Panc1 (cell line): ENCODE measurements at regions of chr17 and their contacts with region 1.

Region 1: DNA sequence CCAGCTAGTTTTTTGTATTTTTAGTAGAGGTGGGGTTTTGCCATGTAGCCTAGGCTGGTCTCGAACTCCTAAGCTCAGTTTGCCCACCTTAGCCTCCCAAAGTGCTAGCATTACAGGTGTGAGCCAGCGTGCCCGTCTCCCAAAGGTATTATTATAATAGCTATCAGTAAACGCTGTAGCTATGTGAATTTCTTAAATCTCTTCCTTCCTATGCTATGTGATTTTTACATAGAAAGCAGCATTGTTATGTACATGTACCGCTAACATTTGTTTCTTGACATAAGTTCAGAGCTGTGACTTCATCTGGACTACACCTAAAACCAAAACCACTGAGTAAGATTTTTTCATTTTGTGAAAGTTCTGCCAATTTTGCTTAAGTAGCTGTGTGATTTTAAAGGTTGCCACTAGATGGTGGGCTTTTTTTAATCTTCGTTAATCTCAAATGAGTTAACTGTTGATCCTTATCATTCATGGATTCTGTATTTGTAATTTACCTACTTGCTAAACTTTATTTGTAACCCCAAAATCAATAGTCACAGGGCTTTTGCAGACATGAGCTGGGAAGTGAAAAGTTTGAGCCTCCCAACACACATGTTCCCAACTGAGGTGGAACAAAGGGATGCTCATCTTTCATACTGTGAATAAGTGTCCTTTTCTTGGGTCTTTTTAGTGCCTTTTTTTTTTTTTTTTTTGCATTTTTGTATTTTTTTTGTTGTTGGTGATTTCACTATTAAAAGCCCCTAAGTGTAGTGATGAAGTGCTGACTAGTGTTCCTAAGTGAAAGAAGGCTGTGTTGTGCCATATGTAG is 21.9 kb downstream of the PRKAR1A start:
- DNase-seq: no peak
- ATAC-seq: no peak
- H3K4me3 ChIP-seq: no peak overlapping the region
- H3K27ac ChIP-seq: no peak overlapping the region
- H3K4me1 ChIP-seq: no peaks in the 10 kb centered on the region
- H3K27me3 ChIP-seq: no peaks in the 10 kb centered on the region
- CTCF ChIP-seq: peak; percentile 28; the same call in 1 of the 2 replicates

Region 2: GRCh38 chr17:68600067-68600930 is 66.2 kb after region 1 on chr17:
- CTCF ChIA-PET with region 1: no interaction called
- POLR2A ChIA-PET with region 1: no interaction called
- in situ Hi-C with region 1: no loop called
- intact Hi-C with region 1: no loop called
- DNase-seq: no peak
- ATAC-seq: peak; percentile 86
- H3K4me3 ChIP-seq: peak overlapping the region; percentile 28 to 37
- H3K27ac ChIP-seq: no peak overlapping the region
- H3K4me1 ChIP-seq: no peaks in the 10 kb centered on the region
- H3K27me3 ChIP-seq: peaks cover 16% of the 10 kb centered on the region
- CTCF ChIP-seq: peak; percentile 52

Region 3: GRCh38 chr17:68759343-68760132 is 225.4 kb after region 1 on chr17:
- CTCF ChIA-PET with region 1: interaction called, 3 read pairs
- POLR2A ChIA-PET with region 1: no interaction called
- in situ Hi-C with region 1: no loop called
- intact Hi-C with region 1: loop called (anchors 5 kb)
- DNase-seq: peak; percentile 58
- ATAC-seq: peak; percentile 98
- H3K4me3 ChIP-seq: peak overlapping the region; percentile 40 to 68
- H3K27ac ChIP-seq: peak overlapping the region; percentile 86
- H3K4me1 ChIP-seq: peaks cover 6% of the 10 kb centered on the region; the same call in 1 of the 2 replicates
- H3K27me3 ChIP-seq: no peaks in the 10 kb centered on the region
- CTCF ChIP-seq: peak; percentile 87